ENCODE measurements at regions of chr15 and their contacts with region 1.

Region 1: GRCh38 chr15:58227706-58228543 is 89.7 kb downstream of the AQP9 start:
- DNase-seq: peak; percentile 87
- H3K4me3 Mint-ChIP-seq: peak overlapping the region; percentile 8
- H3K27ac Mint-ChIP-seq: peak overlapping the region; percentile 62
- H3K4me1 Mint-ChIP-seq: peaks cover 46% of the 10 kb centered on the region
- H3K27me3 Mint-ChIP-seq: no peaks in the 10 kb centered on the region
- CTCF ChIP-seq: peak; percentile 94

Region 2: DNA sequence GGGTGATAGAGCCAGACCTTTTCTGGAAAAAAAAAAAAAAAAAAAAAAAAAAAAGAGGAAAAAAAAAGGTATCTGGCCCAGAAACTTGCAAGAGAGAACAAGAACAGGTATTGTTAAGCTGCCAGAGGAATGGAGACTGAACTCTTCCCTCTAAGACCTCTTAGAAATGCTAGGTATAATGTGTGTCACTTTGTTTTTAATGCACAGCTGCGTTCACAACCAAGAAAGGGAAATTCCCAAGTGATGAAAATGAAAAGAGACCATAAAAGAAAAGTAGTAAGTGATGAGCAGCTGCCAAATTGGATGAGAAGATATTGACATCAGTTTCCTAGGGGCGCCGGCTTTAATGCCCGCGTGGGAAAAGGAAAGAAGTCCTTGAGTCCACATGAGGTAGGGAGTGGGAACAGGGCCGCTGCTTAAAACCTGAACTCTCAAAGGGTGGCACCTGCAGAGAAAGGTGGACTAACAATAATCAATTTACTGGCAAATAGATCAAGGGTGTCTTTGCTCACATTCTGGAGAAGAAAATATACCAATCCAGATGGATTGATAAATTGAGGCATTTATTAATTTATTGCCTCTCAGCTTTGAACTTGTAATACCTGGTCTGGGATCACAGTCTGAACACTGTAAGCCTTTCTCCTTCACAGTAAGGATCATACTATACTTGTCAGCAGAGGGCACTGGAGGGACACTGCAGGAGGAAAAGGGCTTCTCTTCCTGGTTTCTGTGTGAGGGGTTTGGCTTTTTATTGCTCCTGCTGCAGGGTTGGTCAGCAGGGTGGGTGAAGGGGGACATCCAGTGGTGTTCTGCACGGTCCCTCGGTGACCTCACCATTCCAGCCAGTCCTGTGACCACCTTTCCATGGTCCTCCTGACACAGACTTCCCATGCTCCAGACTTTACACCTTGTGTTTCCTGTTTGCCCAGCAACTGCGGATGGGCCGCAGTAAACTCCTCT is 41.8 kb after region 1 on chr15:
- CTCF ChIA-PET with region 1: interaction called, 4 read pairs
- intact Hi-C with region 1: loop called (anchors 5 kb)
- DNase-seq: peak; percentile 76
- H3K4me3 Mint-ChIP-seq: no peak overlapping the region
- H3K27ac Mint-ChIP-seq: peak overlapping the region; percentile 42
- H3K4me1 Mint-ChIP-seq: peaks cover 18% of the 10 kb centered on the region
- H3K27me3 Mint-ChIP-seq: no peaks in the 10 kb centered on the region
- CTCF ChIP-seq: peak; percentile 74

Region 3: GRCh38 chr15:58469432-58470353 is 241.8 kb after region 1 on chr15:
- CTCF ChIA-PET with region 1: interaction called, 5 read pairs
- intact Hi-C with region 1: loop called (anchors 5 kb)
- DNase-seq: peak; percentile 86
- H3K4me3 Mint-ChIP-seq: peak overlapping the region; percentile 9
- H3K27ac Mint-ChIP-seq: peak overlapping the region; percentile 75
- H3K4me1 Mint-ChIP-seq: peaks cover 70% of the 10 kb centered on the region
- H3K27me3 Mint-ChIP-seq: no peaks in the 10 kb centered on the region
- CTCF ChIP-seq: no peak

Region 4: GRCh38 chr15:58562135-58562534 is 334.2 kb after region 1 on chr15:
- CTCF ChIA-PET with region 1: no interaction called
- intact Hi-C with region 1: no loop called
- DNase-seq: no peak
- H3K4me3 Mint-ChIP-seq: no peak overlapping the region
- H3K27ac Mint-ChIP-seq: no peak overlapping the region
- H3K4me1 Mint-ChIP-seq: peaks cover 19% of the 10 kb centered on the region
- H3K27me3 Mint-ChIP-seq: no peaks in the 10 kb centered on the region
- CTCF ChIP-seq: no peak

Region 5: DNA sequence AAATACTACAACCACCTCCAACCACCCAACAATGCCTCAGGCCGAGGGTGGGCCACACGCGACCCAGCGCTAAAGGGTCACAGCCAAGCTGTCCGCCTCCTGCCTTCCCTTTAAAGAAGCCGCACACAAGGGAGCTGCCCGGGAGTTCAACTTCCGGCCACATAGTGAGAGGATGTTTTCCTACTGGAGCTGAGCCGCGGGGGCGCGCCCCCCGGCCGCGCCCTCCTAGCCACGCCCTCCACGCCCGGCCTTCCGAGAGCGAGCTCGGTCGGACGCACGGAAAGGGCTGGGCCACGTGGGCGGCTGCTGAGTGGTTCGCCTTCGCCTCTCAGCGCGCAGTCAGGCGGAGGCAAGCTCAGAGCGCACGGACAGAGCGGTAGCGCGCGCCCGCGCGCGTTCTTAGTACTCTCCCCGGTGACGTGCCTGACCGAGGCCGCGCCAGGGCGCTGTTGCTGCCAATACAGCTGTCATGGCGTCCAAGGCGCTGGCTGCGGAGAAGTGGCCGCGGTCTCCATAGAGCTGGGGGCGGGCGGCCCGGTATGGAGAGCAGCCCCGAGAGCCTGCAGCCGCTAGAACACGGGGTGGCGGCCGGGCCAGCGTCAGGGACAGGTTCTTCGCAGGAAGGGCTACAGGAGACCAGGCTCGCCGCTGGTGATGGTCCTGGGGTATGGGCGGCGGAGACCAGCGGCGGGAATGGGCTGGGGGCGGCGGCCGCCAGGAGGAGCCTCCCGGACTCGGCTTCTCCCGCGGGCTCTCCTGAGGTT is 543.1 kb after region 1 on chr15 and contains the start of gene MINDY2:
- CTCF ChIA-PET with region 1: interaction called, 9 read pairs
- intact Hi-C with region 1: loop called (anchors 5 kb)
- DNase-seq: peak; percentile 99
- H3K4me3 Mint-ChIP-seq: no peak within 1 kb of the TSS
- H3K27ac Mint-ChIP-seq: no peak within 1 kb of the TSS
- H3K4me1 Mint-ChIP-seq: no peaks in the 10 kb centered on the region
- H3K27me3 Mint-ChIP-seq: no peaks in the 10 kb centered on the region
- CTCF ChIP-seq: peak; percentile 53
- total RNA-seq, gene MINDY2: 46.2 and 59.0 TPM in 2 replicates

Region 6: DNA sequence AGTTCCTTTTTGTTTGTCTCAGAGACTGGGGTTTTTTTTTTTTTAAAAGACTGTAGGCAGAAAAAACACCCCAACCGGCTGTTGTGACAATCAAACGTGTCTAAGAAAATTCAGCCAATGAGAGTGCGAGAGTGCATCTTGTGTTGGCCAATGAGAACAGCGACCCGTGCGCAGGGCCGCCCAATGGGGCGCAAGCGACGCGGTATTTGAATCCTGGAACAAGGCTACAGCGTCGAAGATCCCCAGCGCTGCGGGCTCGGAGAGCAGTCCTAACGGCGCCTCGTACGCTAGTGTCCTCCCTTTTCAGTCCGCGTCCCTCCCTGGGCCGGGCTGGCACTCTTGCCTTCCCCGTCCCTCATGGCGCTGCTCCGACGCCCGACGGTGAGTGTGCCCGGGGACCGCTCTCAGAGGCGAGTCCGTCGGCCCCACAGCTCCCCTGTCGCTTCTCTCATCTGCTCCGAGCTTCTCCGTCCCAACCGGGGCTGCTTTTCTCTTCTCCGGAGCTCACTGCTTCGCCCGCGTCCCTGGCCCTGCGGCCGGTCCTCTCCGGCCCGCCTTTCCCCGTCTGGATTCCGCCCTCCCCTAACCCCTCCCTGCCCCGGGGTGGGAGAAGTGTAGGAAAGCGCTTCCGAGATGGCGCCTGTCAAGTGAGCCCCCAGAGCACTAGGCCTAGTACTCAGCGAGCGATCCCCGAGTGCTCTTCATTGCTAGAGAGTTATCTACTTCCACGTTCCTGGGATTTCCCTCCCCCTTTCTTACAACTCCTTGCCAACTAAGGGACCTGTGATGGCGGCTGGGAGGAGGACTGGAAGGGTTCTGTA is 877.2 kb after region 1 on chr15 and contains the start of gene CCNB2:
- CTCF ChIA-PET with region 1: no interaction called
- intact Hi-C with region 1: loop called (anchors 10 kb)
- DNase-seq: peak; percentile 90
- H3K4me3 Mint-ChIP-seq: peak within 1 kb of the TSS; percentile 100
- H3K27ac Mint-ChIP-seq: peak within 1 kb of the TSS; percentile 73
- H3K4me1 Mint-ChIP-seq: peaks cover 26% of the 10 kb centered on the region
- H3K27me3 Mint-ChIP-seq: no peaks in the 10 kb centered on the region
- CTCF ChIP-seq: no peak
- total RNA-seq, gene CCNB2: 72.5 and 86.4 TPM in 2 replicates

Measured in Calu3 (cell line).